WTC11 (cell line): ENCODE measurements at regions of chr21 and their contacts with region 1.

Region 1: DNA sequence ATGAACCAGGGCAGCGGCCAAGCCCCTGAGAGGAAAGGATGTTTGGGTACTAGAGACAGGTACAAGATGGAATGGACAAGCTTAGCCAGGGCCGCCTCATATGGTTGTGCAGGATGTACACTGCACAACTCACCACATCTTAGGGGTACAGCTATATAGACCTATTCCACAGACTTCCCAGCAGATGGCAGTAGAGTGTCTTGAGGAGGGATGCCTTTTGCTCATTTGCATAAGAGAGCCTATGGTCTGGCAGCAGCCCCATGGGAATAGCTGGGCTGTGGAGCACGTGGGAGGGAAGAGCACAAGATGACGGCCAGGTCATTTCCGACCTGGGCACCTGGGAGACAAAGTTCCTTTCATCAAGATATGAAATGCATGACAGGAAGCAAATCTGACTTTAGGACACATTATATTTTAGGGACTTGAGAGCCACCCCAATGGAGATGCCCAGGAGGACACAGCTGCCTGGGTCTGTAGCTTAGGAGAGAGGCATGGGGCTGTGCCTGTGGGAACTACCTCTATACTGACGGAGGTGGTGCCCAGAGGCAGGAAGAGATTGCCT is 215.5 kb downstream of the KCNJ6 start:
- DNase-seq: peak; percentile 46
- ATAC-seq: peak; percentile 100
- H3K4me3 Mint-ChIP-seq: no peak overlapping the region
- H3K27ac Mint-ChIP-seq: no peak overlapping the region
- H3K4me1 Mint-ChIP-seq: no peaks in the 10 kb centered on the region
- H3K27me3 Mint-ChIP-seq: peaks cover 3% of the 10 kb centered on the region; the same call in 1 of the 2 replicates
- CTCF ChIP-seq: peak; percentile 57

Region 2: GRCh38 chr21:37419228-37419906 is 281.4 kb before region 1 on chr21:
- CTCF ChIA-PET with region 1: no interaction called
- POLR2A ChIA-PET with region 1: no interaction called
- DNase-seq: no peak
- ATAC-seq: no peak
- H3K4me3 Mint-ChIP-seq: no peak overlapping the region
- H3K27ac Mint-ChIP-seq: peak overlapping the region; percentile 51; the same call in 1 of the 2 replicates
- H3K4me1 Mint-ChIP-seq: peaks cover 64% of the 10 kb centered on the region
- H3K27me3 Mint-ChIP-seq: no peaks in the 10 kb centered on the region
- CTCF ChIP-seq: no peak

Region 3: GRCh38 chr21:37675202-37675801 is 25.4 kb before region 1 on chr21:
- CTCF ChIA-PET with region 1: interaction called, 29 read pairs
- POLR2A ChIA-PET with region 1: no interaction called
- DNase-seq: peak; percentile 85
- ATAC-seq: peak; percentile 87
- H3K4me3 Mint-ChIP-seq: peak overlapping the region; percentile 10; the same call in 1 of the 2 replicates
- H3K27ac Mint-ChIP-seq: no peak overlapping the region
- H3K4me1 Mint-ChIP-seq: peaks cover 32% of the 10 kb centered on the region
- H3K27me3 Mint-ChIP-seq: peaks cover 29% of the 10 kb centered on the region
- CTCF ChIP-seq: peak; percentile 97

Region 4: GRCh38 chr21:37686991-37687810 is 13.5 kb before region 1 on chr21:
- CTCF ChIA-PET with region 1: interaction called, 14 read pairs
- POLR2A ChIA-PET with region 1: no interaction called
- DNase-seq: no peak
- ATAC-seq: peak; percentile 68
- H3K4me3 Mint-ChIP-seq: no peak overlapping the region
- H3K27ac Mint-ChIP-seq: no peak overlapping the region; the same call in 1 of the 2 replicates
- H3K4me1 Mint-ChIP-seq: peaks cover 29% of the 10 kb centered on the region
- H3K27me3 Mint-ChIP-seq: no peaks in the 10 kb centered on the region; the same call in 1 of the 2 replicates
- CTCF ChIP-seq: no peak

Region 5: GRCh38 chr21:37711836-37712568 is 11.3 kb after region 1 on chr21:
- CTCF ChIA-PET with region 1: interaction called, 49 read pairs
- POLR2A ChIA-PET with region 1: no interaction called
- DNase-seq: peak; percentile 75
- ATAC-seq: peak; percentile 96
- H3K4me3 Mint-ChIP-seq: no peak overlapping the region
- H3K27ac Mint-ChIP-seq: no peak overlapping the region
- H3K4me1 Mint-ChIP-seq: peaks cover 10% of the 10 kb centered on the region
- H3K27me3 Mint-ChIP-seq: no peaks in the 10 kb centered on the region
- CTCF ChIP-seq: peak; percentile 78

Region 6: DNA sequence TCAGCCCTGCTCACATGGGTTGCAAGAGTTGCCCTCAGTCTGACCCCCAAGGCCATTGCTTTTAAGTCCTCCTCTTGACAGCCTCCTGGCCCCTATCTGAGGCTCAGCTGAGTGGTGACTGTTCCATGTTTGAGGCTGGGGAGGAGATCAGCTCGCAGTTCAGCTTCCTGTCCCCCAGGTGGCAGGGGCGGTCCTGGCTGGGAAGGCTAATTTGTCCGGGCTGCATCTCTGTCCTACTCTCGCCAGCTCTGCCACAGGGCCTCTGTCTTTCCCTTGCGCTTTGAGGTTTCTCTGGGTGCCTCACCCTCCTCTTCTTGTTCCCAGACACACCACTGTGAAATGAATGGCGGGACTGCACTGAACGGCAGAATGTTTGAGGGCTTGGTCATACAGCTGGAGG is 58.3 kb after region 1 on chr21:
- CTCF ChIA-PET with region 1: interaction called, 15 read pairs
- POLR2A ChIA-PET with region 1: no interaction called
- DNase-seq: peak; percentile 79
- ATAC-seq: peak; percentile 89
- H3K4me3 Mint-ChIP-seq: no peak overlapping the region
- H3K27ac Mint-ChIP-seq: no peak overlapping the region
- H3K4me1 Mint-ChIP-seq: peaks cover 27% of the 10 kb centered on the region
- H3K27me3 Mint-ChIP-seq: no peaks in the 10 kb centered on the region
- CTCF ChIP-seq: peak; percentile 65

Region 7: GRCh38 chr21:37916310-37917051 is 215.8 kb after region 1 on chr21 and contains the start of gene KCNJ6:
- CTCF ChIA-PET with region 1: interaction called, 16 read pairs
- POLR2A ChIA-PET with region 1: no interaction called
- DNase-seq: peak; percentile 87
- ATAC-seq: peak; percentile 83
- H3K4me3 Mint-ChIP-seq: peak within 1 kb of the TSS; percentile 86
- H3K27ac Mint-ChIP-seq: 0 out of 2 replicates have a peak within 1 kb of the TSS, but pooled peaks have one; percentile 39
- H3K4me1 Mint-ChIP-seq: peaks cover 39% of the 10 kb centered on the region
- H3K27me3 Mint-ChIP-seq: peaks cover 34% of the 10 kb centered on the region
- CTCF ChIP-seq: peak; percentile 39
- total RNA-seq, gene KCNJ6: 0.23 to 0.35 TPM (median 0.34 TPM) in 3 replicates

Region 8: DNA sequence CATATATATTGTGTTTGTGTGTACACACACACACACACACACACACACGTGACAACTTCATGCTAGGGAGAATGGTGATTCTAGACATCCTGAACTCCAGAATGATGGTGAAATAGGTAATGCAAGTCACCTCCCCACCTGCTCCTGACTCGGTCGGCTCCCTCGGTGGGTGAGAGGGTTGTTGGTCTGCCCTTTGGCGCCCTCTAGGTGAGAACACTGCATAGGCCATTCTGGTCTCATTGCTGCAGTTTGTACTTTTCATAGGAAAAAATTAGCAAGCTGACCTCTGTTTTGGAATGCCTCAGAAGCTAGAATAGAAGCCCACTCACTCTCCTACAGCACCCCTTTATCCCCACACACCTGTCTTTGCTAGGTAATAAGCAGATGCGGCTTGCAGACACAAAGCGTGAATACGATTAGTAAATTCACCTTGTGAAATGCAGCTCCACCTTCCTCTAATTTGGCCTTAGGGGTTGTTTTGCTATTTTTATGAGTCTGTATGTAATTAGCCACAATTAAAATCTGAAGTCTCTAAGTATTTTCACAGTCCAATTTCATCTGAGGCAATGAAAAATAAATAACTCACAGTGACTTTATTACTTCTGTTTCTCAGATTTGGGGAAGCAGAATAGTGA is 426.1 kb after region 1 on chr21:
- CTCF ChIA-PET with region 1: interaction called, 16 read pairs
- POLR2A ChIA-PET with region 1: no interaction called
- DNase-seq: peak; percentile 83
- ATAC-seq: peak; percentile 97
- H3K4me3 Mint-ChIP-seq: no peak overlapping the region
- H3K27ac Mint-ChIP-seq: no peak overlapping the region
- H3K4me1 Mint-ChIP-seq: no peaks in the 10 kb centered on the region
- H3K27me3 Mint-ChIP-seq: no peaks in the 10 kb centered on the region
- CTCF ChIP-seq: peak; percentile 70